HepG2 (cell line): ENCODE measurements at regions of chr20 and their contacts with region 1.

Region 1: GRCh38 chr20:38926142-38926933 is at the start of gene FAM83D:
- DNase-seq: peak; percentile 99
- ATAC-seq: peak; percentile 93
- H3K4me3 ChIP-seq: peak within 1 kb of the TSS; percentile 85 to 99 (median 95)
- H3K27ac ChIP-seq: peak within 1 kb of the TSS; percentile 73
- H3K4me1 ChIP-seq: peaks cover 57% of the 10 kb centered on the region
- H3K27me3 ChIP-seq: peaks cover 0 to 8% of the 10 kb centered on the region in 2 experiments; a peak in 2 of 5 replicates
- CTCF ChIP-seq: no peak
- EP300 ChIP-seq: peak in 1 of 2 experiments; percentile 40; a peak in 2 of 4 replicates
- POLR2A ChIP-seq: peak; percentile 100
- RAD21 ChIP-seq: peak; percentile 99
- total RNA-seq, gene FAM83D: 64.0 and 76.5 TPM in 2 replicates

Region 2: GRCh38 chr20:38941726-38942389 is 15.5 kb after region 1 on chr20:
- CTCF ChIA-PET with region 1: no interaction called
- POLR2A ChIA-PET with region 1: interaction called, 12 read pairs
- in situ Hi-C with region 1: no loop called
- intact Hi-C with region 1: no loop called
- DNase-seq: peak; percentile 63
- ATAC-seq: peak; percentile 86
- H3K4me3 ChIP-seq: no peak overlapping the region
- H3K27ac ChIP-seq: peak overlapping the region; percentile 39
- H3K4me1 ChIP-seq: peaks cover 55% of the 10 kb centered on the region
- H3K27me3 ChIP-seq: no peaks in the 10 kb centered on the region
- CTCF ChIP-seq: peak; percentile 30; the same call in 1 of the 2 replicates
- EP300 ChIP-seq: no peak
- POLR2A ChIP-seq: peak in 1 of 2 experiments; percentile 22; a peak in 1 of 4 replicates
- RAD21 ChIP-seq: no peak